A673 (cell line): ENCODE measurements at regions of chr19 and their contacts with region 1.

Region 1: GRCh38 chr19:48618916-48619691 is at the starts of genes RPL18 and SPHK2:
- DNase-seq: peak; percentile 99
- H3K4me3 ChIP-seq: peak within 1 kb of the TSS; percentile 89
- H3K27ac ChIP-seq: peak within 1 kb of the TSS; percentile 93
- H3K4me1 ChIP-seq: peaks cover 24% of the 10 kb centered on the region
- H3K27me3 ChIP-seq: no peaks in the 10 kb centered on the region
- CTCF ChIP-seq: no peak
- total RNA-seq, gene RPL18: 1,417 and 1,448 TPM in 2 replicates
- total RNA-seq, gene SPHK2: 38.8 and 43.0 TPM in 2 replicates

Region 2: GRCh38 chr19:48630296-48631063 is 11.4 kb after region 1 on chr19:
- CTCF ChIA-PET with region 1: no interaction called
- POLR2A ChIA-PET with region 1: interaction called, 10 read pairs
- intact Hi-C with region 1: no loop called
- DNase-seq: peak; percentile 94
- H3K4me3 ChIP-seq: peak overlapping the region; percentile 22
- H3K27ac ChIP-seq: peak overlapping the region; percentile 88
- H3K4me1 ChIP-seq: peaks cover 45% of the 10 kb centered on the region
- H3K27me3 ChIP-seq: no peaks in the 10 kb centered on the region
- CTCF ChIP-seq: peak; percentile 52

Region 3: DNA sequence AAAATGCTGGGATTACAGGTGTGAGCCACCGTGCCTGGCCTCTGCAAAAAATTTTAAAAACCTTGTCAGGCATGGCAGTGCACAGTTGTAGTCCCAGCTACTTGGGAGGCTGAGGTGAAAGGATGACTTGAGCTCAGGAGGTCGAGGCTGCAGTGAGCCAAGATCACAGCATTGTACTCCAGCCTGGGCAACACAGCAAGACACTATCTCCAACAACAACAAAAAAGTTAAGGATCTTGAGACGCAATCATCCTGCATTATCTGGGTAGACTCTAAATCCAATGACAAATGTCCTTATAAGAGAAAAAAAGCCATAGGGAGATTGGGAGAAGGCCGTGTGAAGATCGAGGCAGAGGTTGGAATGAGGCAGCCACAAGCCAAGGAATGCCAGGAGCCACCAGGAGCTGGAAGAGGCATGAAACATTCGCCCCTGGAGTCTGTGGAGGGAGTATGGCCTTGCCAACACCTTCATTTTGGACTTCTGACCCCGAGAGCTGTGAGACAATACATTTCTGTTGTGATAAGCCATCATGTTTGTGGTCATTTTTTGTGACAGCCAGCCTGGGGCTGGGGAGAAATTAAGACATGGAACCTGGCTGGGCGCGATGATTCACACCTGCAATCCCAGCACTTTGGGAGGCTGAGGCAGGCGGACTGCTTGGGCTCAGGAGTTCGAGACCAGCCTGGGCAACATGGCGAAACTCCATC is 32.0 kb after region 1 on chr19:
- CTCF ChIA-PET with region 1: no interaction called
- POLR2A ChIA-PET with region 1: no interaction called
- intact Hi-C with region 1: no loop called
- DNase-seq: no peak
- H3K4me3 ChIP-seq: no peak overlapping the region
- H3K27ac ChIP-seq: no peak overlapping the region
- H3K4me1 ChIP-seq: peaks cover 12% of the 10 kb centered on the region
- H3K27me3 ChIP-seq: no peaks in the 10 kb centered on the region
- CTCF ChIP-seq: no peak